Cardiac septum (tissue), 1 donor: ENCODE measurements at regions of chr3 and their contacts with region 1.

Region 1: GRCh38 chr3:121545574-121546455 is at the start of gene POLQ:
- DNase-seq: peak; percentile 95
- total RNA-seq, gene POLQ: 0.97 TPM

Region 2: DNA sequence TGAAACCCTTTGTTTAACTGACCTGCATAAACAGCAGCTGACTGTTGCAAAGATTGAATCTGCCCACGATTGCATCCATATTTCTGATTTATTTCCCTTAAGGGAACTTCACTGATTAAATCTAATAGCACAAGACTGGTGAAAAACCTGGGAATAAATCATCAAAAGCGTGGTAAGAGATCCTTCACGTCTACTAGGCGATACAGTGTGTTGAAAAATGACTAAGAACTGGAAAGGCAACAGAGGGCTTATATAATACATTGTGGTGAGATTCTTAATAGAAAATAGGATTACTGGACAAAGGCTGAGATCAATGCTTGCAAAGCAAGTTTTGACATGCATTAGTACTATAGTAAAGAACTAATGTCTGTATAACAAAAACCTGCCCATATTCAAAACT is 49.0 kb before region 1 on chr3:
- intact Hi-C with region 1: no loop called
- DNase-seq: no peak

Region 3: DNA sequence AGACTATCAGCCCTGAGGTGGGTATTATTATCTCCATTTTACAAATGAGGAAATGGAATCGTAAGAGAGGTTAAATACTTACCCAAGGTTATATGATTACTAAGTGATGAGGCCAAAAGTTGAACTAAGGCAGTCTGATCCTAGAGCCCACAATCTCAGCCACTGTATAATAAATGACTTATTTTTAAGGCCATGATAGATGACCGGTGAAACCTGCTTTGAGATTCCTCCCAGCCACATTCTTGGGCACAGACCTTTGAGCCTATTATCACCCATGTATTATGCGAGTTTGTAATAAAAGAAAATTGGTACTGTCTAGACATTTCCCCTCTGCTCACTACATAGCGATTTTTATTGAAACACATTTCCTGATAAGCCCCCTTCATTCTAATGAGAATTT is 37.4 kb before region 1 on chr3:
- intact Hi-C with region 1: no loop called
- DNase-seq: no peak

Region 4: GRCh38 chr3:121592856-121593702 is 47.3 kb after region 1 on chr3 and contains the start of gene FBXO40:
- intact Hi-C with region 1: loop called (anchors 5 kb)
- DNase-seq: no peak
- total RNA-seq, gene FBXO40: 147 TPM

Region 5: GRCh38 chr3:121648219-121648958 is 102.6 kb after region 1 on chr3:
- intact Hi-C with region 1: loop called (anchors 2 kb)
- DNase-seq: no peak

Region 6: DNA sequence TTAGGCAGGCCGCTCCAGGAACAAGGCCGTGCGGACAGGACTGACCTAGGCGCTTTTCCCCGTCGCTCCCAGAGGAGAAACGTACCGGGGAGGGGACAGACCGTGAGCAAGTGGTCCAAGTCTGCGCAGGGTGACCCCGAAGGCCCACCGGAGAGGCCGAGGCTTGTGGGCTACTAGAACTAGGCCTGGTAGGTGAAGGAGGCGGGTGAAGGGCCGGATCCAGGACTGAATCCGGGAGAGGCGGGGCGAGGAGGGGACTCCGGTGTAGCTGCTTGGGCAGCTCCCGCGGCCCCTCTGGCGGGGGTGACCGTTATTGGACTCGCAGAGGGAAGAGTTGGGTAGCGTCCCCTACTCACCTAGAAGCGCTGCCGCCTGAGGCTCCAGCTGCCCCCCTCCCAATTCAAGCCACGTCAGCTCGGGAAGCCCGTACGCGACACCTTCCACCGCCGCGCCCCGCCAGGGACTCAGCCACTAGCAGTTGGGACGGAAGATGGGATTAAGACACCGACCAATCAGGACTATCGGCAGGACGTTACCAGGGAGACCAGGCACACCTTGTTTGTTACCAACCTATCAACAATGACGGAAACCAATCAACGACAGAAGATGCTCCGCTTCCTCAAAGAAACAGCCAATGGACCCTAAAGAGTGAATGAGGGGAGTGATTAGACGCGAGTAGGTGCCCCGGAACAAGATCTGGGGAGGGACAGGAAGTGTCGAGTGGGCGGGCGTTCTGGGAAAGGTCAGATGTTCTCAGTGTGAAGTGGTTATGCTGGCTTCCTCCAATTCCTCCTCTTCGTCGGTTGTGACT is 203.7 kb after region 1 on chr3 and contains the start of gene GOLGB1:
- intact Hi-C with region 1: loop called (anchors 5 kb)
- DNase-seq: peak; percentile 98
- total RNA-seq, gene GOLGB1: 49.9 TPM

Region 7: DNA sequence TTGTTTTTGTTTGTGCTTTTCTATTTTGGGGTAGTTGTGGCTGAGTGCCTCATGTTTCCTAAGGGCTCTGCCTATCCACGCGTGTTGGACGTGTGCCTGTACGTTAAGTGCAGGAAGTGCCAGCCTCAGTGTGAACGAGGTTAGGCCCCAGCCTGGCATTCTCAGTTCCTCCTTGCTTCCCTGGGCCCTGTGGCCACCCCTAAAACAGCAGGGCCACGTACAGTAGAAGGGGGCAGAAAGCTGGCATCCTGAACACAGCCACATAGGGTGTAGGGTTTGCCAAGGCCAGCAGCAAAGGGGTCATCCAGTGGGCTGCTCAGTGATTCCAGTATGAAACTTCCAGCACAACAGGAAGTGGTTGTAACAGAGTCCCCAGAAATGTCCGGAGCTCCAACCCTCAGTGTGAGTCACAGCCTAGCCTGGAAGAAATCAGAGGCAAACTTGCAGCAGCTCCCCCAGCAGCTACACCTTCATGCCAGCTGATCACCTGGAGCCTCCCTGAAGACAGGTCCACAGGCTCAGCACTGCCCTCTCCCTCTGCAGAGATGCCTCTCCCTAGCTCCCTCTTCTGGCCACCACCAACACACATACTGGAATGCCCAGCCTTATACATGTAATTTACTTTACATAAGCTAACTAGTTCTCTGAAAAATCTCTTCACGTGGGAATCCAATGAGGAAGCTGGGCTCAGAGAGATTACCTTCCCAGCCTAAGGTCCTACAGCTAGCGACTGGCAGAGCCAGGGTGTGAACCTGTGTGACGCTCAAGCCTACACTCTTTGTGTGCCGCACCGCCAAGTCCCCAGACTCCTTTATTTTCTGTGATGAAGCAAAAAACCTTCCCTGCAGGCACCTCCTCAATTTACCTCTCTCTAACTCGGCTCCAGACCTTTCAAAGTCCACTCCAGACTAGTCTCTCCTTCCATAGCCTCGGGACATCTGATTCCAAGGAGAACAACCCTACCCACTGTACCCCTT is 449.6 kb after region 1 on chr3:
- intact Hi-C with region 1: loop called (anchors 5 kb)
- DNase-seq: no peak

Region 8: GRCh38 chr3:122258757-122259371 is 713.0 kb after region 1 on chr3:
- intact Hi-C with region 1: loop called (anchors 5 kb)
- DNase-seq: peak; percentile 83

Region 9: GRCh38 chr3:122679085-122679881 is 1133.5 kb after region 1 on chr3:
- intact Hi-C with region 1: loop called (anchors 5 kb)
- DNase-seq: peak; percentile 90